T-cell (primary cell): ENCODE measurements at regions of chr6 and their contacts with region 1.

Region 1: DNA sequence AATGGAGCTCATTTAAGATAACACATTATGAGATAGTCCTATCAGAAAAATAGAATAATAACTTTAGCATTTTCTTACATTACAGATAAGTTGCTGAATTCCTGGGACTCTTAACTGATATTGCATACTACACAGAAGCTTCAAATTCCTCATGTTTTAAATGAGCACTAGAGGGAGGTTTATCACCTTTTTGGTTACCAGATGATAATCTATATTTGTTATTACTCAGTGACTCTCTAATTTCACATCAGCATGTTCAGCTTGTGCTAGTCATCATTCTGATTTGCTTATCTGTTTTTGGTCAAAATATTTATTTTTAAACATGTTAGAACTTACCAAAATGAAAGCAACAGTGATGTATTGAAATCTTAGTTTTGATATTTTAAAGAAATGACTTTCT is 20.5 kb upstream of the GJA10 start:
- DNase-seq: no peak
- ATAC-seq: no peak
- H3K4me3 ChIP-seq: no peak overlapping the region
- H3K4me3 Mint-ChIP-seq: no peak overlapping the region
- H3K27ac ChIP-seq: no peak overlapping the region
- H3K27ac Mint-ChIP-seq: no peak overlapping the region
- H3K4me1 ChIP-seq: no peaks in the 10 kb centered on the region
- H3K4me1 Mint-ChIP-seq: peaks cover 0 to 5% (median 0%) of the 10 kb centered on the region in 3 donors
- H3K27me3 ChIP-seq: no peaks in the 10 kb centered on the region
- H3K27me3 Mint-ChIP-seq: no peaks in the 10 kb centered on the region

Region 2: GRCh38 chr6:89360415-89360999 is 513.2 kb before region 1 on chr6:
- CTCF ChIA-PET with region 1: interaction called in 1 of 2 experiments, 12 read pairs
- POLR2A ChIA-PET with region 1: no interaction called
- DNase-seq: peak in 1 of 35 experiments; percentile 24
- ATAC-seq: peak; percentile 42 to 77 (median 70)
- H3K4me3 ChIP-seq: no peak overlapping the region
- H3K4me3 Mint-ChIP-seq: no peak overlapping the region
- H3K27ac ChIP-seq: no peak overlapping the region
- H3K27ac Mint-ChIP-seq: peak overlapping the region in 1 of 2 donors; percentile 2
- H3K4me1 ChIP-seq: peaks cover 0 to 29% of the 10 kb centered on the region in 2 experiments
- H3K4me1 Mint-ChIP-seq: peaks cover 45 to 65% (median 52%) of the 10 kb centered on the region in 3 donors
- H3K27me3 ChIP-seq: no peaks in the 10 kb centered on the region
- H3K27me3 Mint-ChIP-seq: no peaks in the 10 kb centered on the region